GM12878 (cell line): ENCODE measurements at regions of chr1 and their contacts with region 1.

Region 1: DNA sequence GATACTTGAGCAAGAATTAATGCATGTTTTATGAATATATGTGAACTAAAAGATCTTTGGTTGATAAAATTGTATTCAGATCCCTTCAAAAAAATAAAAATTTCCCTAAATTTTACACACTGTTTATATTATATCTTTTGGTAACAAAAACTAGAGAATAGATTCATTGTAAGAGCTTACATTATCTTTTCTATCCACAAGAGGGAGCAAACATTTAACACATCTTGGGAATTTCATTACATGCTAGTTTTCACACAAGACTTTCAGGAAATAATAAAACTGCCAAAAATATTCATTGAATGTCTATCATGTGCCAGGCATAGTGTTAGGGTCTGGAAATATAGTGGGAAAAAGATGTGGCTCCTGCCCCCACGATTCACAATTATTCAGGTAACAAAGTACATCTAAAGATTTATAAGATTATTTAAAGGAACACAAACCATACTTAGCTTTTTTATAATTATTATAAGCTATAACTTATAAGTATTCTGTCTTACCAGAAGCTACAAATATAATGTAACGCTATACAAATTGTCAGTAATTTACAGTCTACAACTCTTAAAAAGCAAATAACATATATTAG is 30.6 kb downstream of the FAF1 start:
- DNase-seq: no peak
- ATAC-seq: no peak; the same call in 2 of the 3 replicates
- H3K4me3 ChIP-seq: no peak overlapping the region
- H3K27ac ChIP-seq: no peak overlapping the region
- H3K4me1 ChIP-seq: peaks cover 3% of the 10 kb centered on the region
- H3K27me3 ChIP-seq: no peaks in the 10 kb centered on the region
- CTCF ChIP-seq: peak; percentile 29 to 53 (median 45); a peak in 4 of 6 replicates
- EP300 ChIP-seq: no peak
- POLR2A ChIP-seq: no peak
- RAD21 ChIP-seq: peak; percentile 52

Region 2: GRCh38 chr1:50774759-50775351 is 154.6 kb before region 1 on chr1:
- CTCF ChIA-PET with region 1: interaction called, 13 read pairs
- POLR2A ChIA-PET with region 1: no interaction called
- RAD21 ChIA-PET with region 1: interaction called, 6 read pairs
- SMC1A ChIA-PET with region 1: interaction called, 8 read pairs
- in situ Hi-C with region 1: no loop called
- intact Hi-C with region 1: no loop called
- DNase-seq: peak; percentile 11
- ATAC-seq: peak; percentile 79
- H3K4me3 ChIP-seq: no peak overlapping the region
- H3K27ac ChIP-seq: no peak overlapping the region
- H3K4me1 ChIP-seq: no peaks in the 10 kb centered on the region
- H3K27me3 ChIP-seq: no peaks in the 10 kb centered on the region
- CTCF ChIP-seq: peak; percentile 50 to 65 (median 53)
- EP300 ChIP-seq: no peak
- POLR2A ChIP-seq: no peak
- RAD21 ChIP-seq: peak; percentile 79

Region 3: DNA sequence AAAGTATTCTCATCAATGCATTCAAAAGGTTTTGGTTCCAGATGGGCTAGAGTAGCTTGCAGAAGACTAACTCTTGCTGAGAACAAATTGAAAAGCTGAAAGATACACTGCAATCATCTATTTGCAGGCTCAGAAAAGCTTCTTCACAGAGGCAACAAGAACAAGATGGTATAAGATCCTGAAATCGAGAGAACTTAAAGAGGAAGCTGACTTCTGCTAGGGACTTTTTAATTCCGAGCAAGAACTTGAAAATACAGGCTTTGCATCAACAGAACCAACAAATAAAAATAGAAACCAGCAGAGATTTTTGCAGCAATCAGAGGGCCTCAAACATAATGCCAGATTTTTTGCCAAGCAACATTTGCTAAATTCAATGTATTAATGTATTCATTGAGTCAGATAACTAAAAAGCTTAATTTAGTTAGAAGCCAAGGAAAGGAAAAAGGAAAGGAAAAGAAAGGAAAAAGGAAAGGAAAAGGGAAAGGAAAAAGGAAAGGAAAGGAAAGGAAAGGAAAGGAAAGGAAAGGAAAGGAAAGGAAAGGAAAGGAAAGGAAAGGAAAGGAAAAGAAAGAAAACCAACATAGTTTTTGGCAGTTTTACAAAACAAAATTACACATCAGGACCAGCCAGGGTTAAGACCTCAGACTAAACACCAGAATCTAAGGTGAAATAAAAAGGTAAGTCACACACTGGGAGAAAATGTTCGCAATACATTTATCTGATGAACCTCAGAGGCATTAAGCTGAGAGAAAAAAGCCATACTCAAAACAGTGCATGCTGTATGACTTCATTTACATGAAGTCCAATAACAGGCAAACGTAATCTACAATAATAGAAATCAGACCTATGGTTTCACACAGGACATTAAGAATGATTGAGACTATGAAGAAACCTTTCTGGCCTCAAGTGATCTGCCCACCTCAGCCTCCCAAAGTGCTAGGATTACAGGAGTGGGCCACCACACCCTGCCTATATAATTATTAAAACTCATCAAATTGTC is 12.0 kb before region 1 on chr1:
- CTCF ChIA-PET with region 1: interaction called, 10 read pairs
- POLR2A ChIA-PET with region 1: no interaction called
- RAD21 ChIA-PET with region 1: no interaction called
- SMC1A ChIA-PET with region 1: interaction called, 5 read pairs
- in situ Hi-C with region 1: no loop called
- intact Hi-C with region 1: no loop called
- DNase-seq: peak; percentile 15
- ATAC-seq: peak; percentile 52
- H3K4me3 ChIP-seq: peak overlapping the region; percentile 3; the same call in 1 of the 2 replicates
- H3K27ac ChIP-seq: peak overlapping the region; percentile 49
- H3K4me1 ChIP-seq: peaks cover 3% of the 10 kb centered on the region
- H3K27me3 ChIP-seq: no peaks in the 10 kb centered on the region
- CTCF ChIP-seq: no peak
- EP300 ChIP-seq: no peak
- POLR2A ChIP-seq: no peak
- RAD21 ChIP-seq: no peak

Region 4: GRCh38 chr1:50950396-50950795 is 20.9 kb after region 1 on chr1:
- CTCF ChIA-PET with region 1: interaction called, 10 read pairs
- POLR2A ChIA-PET with region 1: no interaction called
- RAD21 ChIA-PET with region 1: no interaction called
- SMC1A ChIA-PET with region 1: interaction called, 3 read pairs
- in situ Hi-C with region 1: no loop called
- intact Hi-C with region 1: no loop called
- DNase-seq: no peak
- ATAC-seq: no peak
- H3K4me3 ChIP-seq: no peak overlapping the region
- H3K27ac ChIP-seq: no peak overlapping the region
- H3K4me1 ChIP-seq: peaks cover 10% of the 10 kb centered on the region; the same call in 1 of the 2 replicates
- H3K27me3 ChIP-seq: no peaks in the 10 kb centered on the region
- CTCF ChIP-seq: no peak
- EP300 ChIP-seq: no peak
- POLR2A ChIP-seq: no peak
- RAD21 ChIP-seq: no peak

Region 5: GRCh38 chr1:50968158-50968820 is 38.8 kb after region 1 on chr1:
- CTCF ChIA-PET with region 1: interaction called, 13 read pairs
- POLR2A ChIA-PET with region 1: interaction called, 3 read pairs
- RAD21 ChIA-PET with region 1: no interaction called
- SMC1A ChIA-PET with region 1: interaction called, 8 read pairs
- in situ Hi-C with region 1: no loop called
- intact Hi-C with region 1: loop called (anchors 5 kb)
- DNase-seq: no peak
- ATAC-seq: peak; percentile 87
- H3K4me3 ChIP-seq: peak overlapping the region; percentile 99
- H3K27ac ChIP-seq: peak overlapping the region; percentile 92
- H3K4me1 ChIP-seq: no peaks in the 10 kb centered on the region; the same call in 1 of the 2 replicates
- H3K27me3 ChIP-seq: no peaks in the 10 kb centered on the region
- CTCF ChIP-seq: peak; percentile 28 to 36 (median 36); a peak in 4 of 6 replicates
- EP300 ChIP-seq: no peak
- POLR2A ChIP-seq: peak; percentile 75
- RAD21 ChIP-seq: peak; percentile 21; the same call in 1 of the 2 replicates